ENCODE measurements at regions of chr14 and their contacts with region 1.

Region 1: DNA sequence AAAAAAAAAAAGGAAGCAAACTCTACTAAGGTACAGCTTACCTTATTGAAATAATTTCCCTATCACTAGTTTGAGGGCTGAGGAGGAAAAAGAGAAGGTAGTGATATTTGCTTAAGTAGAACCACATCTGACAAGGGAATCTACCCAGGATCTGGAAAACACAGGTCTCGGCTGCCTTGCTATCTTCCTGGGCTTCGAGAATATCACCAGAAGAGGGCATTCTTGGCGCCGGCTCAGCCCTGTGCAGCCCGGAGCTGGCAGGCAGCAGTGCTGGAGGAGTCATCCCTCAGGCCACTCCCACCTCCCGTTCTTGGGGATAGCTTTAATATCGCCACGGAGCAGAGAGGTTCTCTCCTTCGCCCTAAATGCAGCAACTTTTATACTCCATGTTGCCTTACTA is 1181.2 kb downstream of the VRK1 start:
- DNase-seq: peak; percentile 62 to 84 (median 71)
- ATAC-seq: peak; percentile 69 to 75
- H3K4me3 Mint-ChIP-seq: peak overlapping the region; percentile 90 to 98 (median 94)
- H3K27ac Mint-ChIP-seq: peak overlapping the region; percentile 86 to 98 (median 96)
- H3K4me1 Mint-ChIP-seq: peaks cover 39 to 78% (median 47%) of the 10 kb centered on the region in 4 donors
- H3K27me3 Mint-ChIP-seq: no peaks in the 10 kb centered on the region

Region 2: GRCh38 chr14:97602438-97603117 is 375.8 kb before region 1 on chr14:
- POLR2A ChIA-PET with region 1: interaction called, 17 read pairs
- DNase-seq: peak; percentile 52 to 91 (median 78)
- ATAC-seq: peak; percentile 88 to 92
- H3K4me3 Mint-ChIP-seq: no peak overlapping the region
- H3K27ac Mint-ChIP-seq: no peak overlapping the region
- H3K4me1 Mint-ChIP-seq: peaks cover 9 to 31% (median 18%) of the 10 kb centered on the region in 4 donors
- H3K27me3 Mint-ChIP-seq: no peaks in the 10 kb centered on the region

Region 3: GRCh38 chr14:97902630-97903029 is 75.7 kb before region 1 on chr14:
- POLR2A ChIA-PET with region 1: no interaction called
- DNase-seq: no peak
- ATAC-seq: no peak
- H3K4me3 Mint-ChIP-seq: no peak overlapping the region
- H3K27ac Mint-ChIP-seq: no peak overlapping the region
- H3K4me1 Mint-ChIP-seq: peaks cover 0 to 10% (median 5%) of the 10 kb centered on the region in 4 donors
- H3K27me3 Mint-ChIP-seq: no peaks in the 10 kb centered on the region

Region 4: DNA sequence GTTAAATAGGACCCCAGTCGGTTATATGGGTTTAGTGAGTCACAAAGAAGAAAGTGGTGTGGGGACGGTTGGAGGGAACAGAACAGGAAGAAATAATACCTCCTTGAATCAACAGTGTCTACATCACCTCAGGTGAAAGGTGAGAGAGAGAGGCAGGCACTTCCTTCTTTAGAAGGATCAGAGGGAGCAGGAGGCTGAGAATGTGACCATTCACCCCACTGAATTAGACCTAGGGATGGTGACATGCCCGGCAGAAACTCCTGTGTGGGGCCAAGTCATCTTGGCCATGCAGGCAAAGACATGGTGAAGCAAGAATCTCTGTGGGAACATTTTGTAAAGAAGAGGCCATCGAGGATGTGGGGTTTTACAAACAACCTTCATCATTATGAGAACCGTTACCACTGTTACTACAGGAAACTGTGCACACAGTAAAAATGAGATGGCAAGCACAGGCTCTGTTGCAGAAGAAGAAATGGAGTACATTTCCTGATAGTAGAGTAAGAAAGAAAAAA is 15.7 kb after region 1 on chr14:
- POLR2A ChIA-PET with region 1: interaction called, 89 read pairs
- DNase-seq: peak in 8 of 10 donors; percentile 16 to 83 (median 67)
- ATAC-seq: peak; percentile 82 to 92
- H3K4me3 Mint-ChIP-seq: peak overlapping the region; percentile 33 to 73 (median 63)
- H3K27ac Mint-ChIP-seq: peak overlapping the region; percentile 91 to 99 (median 95)
- H3K4me1 Mint-ChIP-seq: peaks cover 41 to 87% (median 81%) of the 10 kb centered on the region in 4 donors
- H3K27me3 Mint-ChIP-seq: no peaks in the 10 kb centered on the region

Region 5: DNA sequence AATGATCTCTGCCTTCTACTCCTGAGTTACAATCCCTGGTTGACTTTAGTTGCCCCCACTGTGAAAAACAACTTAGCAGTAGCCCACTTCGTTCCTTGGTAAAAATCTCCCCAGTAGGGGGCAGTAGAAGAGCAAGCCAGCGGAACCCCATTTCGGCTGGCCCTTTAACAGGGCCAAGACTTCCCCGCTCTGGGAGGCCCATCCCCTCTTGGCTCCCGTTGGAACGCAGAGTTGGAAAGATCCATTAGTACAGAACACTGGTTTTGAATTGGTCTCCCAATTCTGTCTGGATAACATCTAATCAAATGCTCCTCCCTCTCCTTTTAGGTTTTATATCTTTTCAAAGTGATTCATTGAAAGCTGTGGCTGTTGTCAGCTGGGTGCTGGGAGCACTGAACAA is 160.3 kb after region 1 on chr14:
- POLR2A ChIA-PET with region 1: interaction called, 155 read pairs
- DNase-seq: peak; percentile 38 to 88 (median 74)
- ATAC-seq: peak; percentile 40 to 62
- H3K4me3 Mint-ChIP-seq: peak overlapping the region; percentile 85 to 97 (median 94)
- H3K27ac Mint-ChIP-seq: peak overlapping the region; percentile 96 to 100 (median 99)
- H3K4me1 Mint-ChIP-seq: peaks cover 59 to 97% (median 87%) of the 10 kb centered on the region in 4 donors
- H3K27me3 Mint-ChIP-seq: no peaks in the 10 kb centered on the region

Region 6: DNA sequence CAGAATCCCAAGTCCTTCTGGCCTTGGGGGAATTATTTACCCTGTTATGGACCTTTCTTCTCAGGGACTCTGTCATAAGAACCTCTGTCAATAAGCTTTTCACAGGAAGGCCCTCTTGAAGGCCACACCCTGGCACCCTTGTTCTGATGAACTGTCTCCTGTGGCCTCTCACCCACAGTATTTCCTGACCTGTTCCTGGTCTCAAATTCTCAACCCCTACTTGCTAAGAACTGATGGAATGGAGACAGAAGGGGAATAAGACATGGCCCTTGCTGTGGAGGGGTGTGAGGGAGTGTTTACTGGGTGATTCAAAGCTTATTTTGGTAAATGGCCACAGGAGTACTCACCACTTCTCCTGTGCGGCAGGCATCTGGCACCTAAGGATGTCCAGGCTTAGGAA is 210.7 kb after region 1 on chr14:
- POLR2A ChIA-PET with region 1: interaction called, 10 read pairs
- DNase-seq: peak in 2 of 10 donors; percentile 48
- ATAC-seq: peak; percentile 24 to 26
- H3K4me3 Mint-ChIP-seq: peak overlapping the region; percentile 58 to 85 (median 70)
- H3K27ac Mint-ChIP-seq: peak overlapping the region; percentile 95 to 100 (median 98)
- H3K4me1 Mint-ChIP-seq: peaks cover 62 to 99% (median 97%) of the 10 kb centered on the region in 4 donors
- H3K27me3 Mint-ChIP-seq: no peaks in the 10 kb centered on the region

Region 7: DNA sequence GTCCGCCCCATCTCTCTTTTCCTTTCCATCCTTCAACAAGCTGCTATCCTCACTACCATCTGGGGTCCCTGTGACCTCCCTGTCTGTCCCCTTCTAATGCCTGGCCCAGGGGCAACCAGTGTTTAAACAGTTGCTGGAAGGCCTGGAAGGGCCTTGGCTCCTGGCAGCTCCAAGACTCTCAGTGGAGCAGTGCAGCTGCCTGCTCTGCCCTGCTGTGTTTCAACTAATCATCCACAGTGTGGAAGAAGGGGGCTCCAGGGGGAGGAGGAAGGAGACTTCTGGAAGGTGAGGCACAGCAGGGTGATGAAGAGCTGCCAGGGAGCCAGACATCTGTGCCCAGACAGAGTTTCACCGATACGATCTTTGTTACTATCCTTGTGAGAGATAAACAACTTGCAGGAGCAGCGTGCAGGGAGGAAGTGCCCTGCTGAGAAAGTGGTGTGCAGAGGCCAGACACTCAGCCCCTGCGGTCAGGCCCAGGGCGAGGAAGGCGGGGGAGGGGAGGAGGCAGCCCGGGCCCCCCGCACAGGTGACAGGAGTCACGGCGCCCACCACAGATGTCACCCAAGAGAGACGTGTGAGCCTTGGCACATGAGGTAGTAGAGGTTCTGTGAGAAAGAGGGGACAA is 231.8 kb after region 1 on chr14:
- POLR2A ChIA-PET with region 1: interaction called, 10 read pairs
- DNase-seq: peak; percentile 35 to 84 (median 58)
- ATAC-seq: peak; percentile 69 to 75
- H3K4me3 Mint-ChIP-seq: peak overlapping the region; percentile 69 to 85 (median 78)
- H3K27ac Mint-ChIP-seq: peak overlapping the region; percentile 96 to 100 (median 98)
- H3K4me1 Mint-ChIP-seq: peaks cover 57 to 98% (median 90%) of the 10 kb centered on the region in 4 donors
- H3K27me3 Mint-ChIP-seq: no peaks in the 10 kb centered on the region

Region 8: DNA sequence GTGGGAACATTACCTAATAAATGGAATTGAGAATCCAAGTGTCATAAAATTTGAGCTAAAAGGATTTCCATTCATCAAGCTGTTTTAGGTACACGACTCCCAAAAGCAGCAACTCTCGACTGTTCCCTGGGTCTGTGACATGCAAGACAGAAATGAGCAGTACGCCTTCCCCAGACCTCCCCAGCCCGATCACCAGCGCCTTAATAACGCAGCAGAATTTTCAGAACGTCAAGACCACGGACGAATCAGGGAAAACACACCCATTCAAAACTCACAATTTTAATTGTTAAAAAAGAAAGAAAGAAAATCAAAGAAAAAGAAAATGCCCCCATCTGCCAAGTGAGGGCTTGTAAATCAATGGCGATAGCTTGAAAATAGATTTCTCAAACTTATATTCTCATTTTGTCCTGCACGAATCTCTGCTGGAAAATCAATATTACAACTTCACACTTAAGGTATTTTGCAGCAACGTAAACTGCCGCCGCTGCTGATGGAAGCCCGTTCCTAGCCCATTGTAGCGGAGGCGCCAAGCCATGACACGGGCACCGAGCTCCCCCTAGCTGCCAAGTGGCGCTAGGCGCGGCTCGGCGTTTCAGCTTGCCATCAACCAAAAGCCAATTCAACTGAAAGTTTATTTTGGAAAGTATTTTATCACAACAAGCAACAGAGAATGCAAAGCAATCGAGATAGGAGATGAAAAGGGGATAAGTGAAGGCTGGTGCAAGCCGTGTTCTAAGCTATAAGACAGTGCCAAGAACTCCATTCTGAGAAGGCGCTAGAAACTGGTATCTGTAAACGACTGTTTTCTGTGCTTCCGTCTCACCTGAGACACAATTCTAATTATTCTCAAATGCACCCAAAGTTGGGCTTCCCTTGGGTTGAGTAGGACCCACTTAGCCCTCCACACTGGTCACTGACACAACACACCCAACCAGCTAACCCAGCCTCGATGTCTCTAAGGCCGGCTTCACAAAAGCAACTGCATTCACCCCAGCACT is 1288.1 kb after region 1 on chr14:
- POLR2A ChIA-PET with region 1: interaction called, 69 read pairs
- DNase-seq: peak; percentile 81 to 92 (median 89)
- ATAC-seq: peak; percentile 19 to 34
- H3K4me3 Mint-ChIP-seq: peak overlapping the region; percentile 88 to 100 (median 98)
- H3K27ac Mint-ChIP-seq: peak overlapping the region; percentile 99 to 100 (median 100)
- H3K4me1 Mint-ChIP-seq: peaks cover 36 to 73% (median 53%) of the 10 kb centered on the region in 4 donors
- H3K27me3 Mint-ChIP-seq: peaks cover 0 to 8% (median 0%) of the 10 kb centered on the region in 5 donors

Measured in naive thymus-derived CD8-positive, alpha-beta T cell (primary cell).